ENCODE measurements at regions of chr1 and their contacts with region 1.

Region 1: DNA sequence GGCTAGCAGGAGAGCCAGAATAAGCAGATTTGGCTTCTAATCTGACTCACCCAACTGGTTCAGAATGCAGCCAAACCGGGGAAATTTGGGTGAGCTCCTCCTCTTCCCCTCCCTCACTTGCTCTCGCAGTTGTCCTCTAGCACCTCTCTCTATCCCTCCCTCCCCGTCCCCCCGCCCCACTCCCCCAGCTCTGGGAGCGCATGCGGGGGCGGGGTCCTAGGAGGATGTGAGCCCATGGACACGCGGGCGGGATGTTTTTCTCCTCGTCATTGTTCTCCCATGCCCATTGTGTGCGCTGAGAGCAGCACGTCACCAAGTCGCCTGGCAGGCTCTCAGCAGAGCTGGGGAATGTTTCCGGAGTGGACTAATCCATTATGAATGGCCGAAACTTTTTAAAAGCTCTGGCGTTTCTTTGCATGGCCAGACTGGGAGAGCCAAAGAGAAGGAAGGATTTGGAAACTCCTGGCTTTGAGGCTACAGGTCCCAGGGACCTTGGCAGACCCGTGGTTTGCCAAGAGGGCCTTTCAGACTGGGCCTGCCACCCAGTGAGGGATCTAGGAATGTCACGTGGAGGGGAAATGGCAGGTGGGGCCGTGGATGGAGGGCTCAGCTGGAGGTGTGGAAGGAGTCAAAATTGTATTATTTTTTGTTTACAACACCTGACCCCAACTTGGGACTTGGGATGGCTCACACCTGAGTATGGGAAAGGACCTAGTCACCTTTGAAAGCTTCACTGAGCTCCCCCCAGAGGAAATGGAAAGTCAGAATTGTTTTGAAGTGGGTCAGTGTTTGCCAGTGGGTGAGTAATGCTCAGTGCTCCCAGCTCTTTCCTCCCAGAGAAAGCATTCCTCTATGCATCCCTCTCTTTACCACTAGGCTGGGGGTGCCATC is 39.2 kb downstream of the CDK18 start:
- DNase-seq: peak; percentile 99
- H3K4me3 Mint-ChIP-seq: peak overlapping the region; percentile 66
- H3K27ac Mint-ChIP-seq: peak overlapping the region; percentile 58
- H3K4me1 Mint-ChIP-seq: peaks cover 9% of the 10 kb centered on the region
- H3K27me3 Mint-ChIP-seq: peaks cover 7% of the 10 kb centered on the region
- CTCF ChIP-seq: no peak

Region 2: GRCh38 chr1:205260948-205261732 is 282.5 kb before region 1 on chr1:
- CTCF ChIA-PET with region 1: no interaction called
- POLR2A ChIA-PET with region 1: no interaction called
- intact Hi-C with region 1: no loop called
- DNase-seq: peak; percentile 89
- H3K4me3 Mint-ChIP-seq: no peak overlapping the region
- H3K27ac Mint-ChIP-seq: no peak overlapping the region
- H3K4me1 Mint-ChIP-seq: peaks cover 30% of the 10 kb centered on the region
- H3K27me3 Mint-ChIP-seq: no peaks in the 10 kb centered on the region
- CTCF ChIP-seq: no peak

Region 3: GRCh38 chr1:205528887-205529825 is 14.5 kb before region 1 on chr1:
- CTCF ChIA-PET with region 1: interaction called, 90 read pairs
- POLR2A ChIA-PET with region 1: interaction called, 5 read pairs
- intact Hi-C with region 1: no loop called
- DNase-seq: peak; percentile 89
- H3K4me3 Mint-ChIP-seq: peak overlapping the region; percentile 32
- H3K27ac Mint-ChIP-seq: no peak overlapping the region
- H3K4me1 Mint-ChIP-seq: peaks cover 6% of the 10 kb centered on the region
- H3K27me3 Mint-ChIP-seq: no peaks in the 10 kb centered on the region
- CTCF ChIP-seq: peak; percentile 100

Region 4: DNA sequence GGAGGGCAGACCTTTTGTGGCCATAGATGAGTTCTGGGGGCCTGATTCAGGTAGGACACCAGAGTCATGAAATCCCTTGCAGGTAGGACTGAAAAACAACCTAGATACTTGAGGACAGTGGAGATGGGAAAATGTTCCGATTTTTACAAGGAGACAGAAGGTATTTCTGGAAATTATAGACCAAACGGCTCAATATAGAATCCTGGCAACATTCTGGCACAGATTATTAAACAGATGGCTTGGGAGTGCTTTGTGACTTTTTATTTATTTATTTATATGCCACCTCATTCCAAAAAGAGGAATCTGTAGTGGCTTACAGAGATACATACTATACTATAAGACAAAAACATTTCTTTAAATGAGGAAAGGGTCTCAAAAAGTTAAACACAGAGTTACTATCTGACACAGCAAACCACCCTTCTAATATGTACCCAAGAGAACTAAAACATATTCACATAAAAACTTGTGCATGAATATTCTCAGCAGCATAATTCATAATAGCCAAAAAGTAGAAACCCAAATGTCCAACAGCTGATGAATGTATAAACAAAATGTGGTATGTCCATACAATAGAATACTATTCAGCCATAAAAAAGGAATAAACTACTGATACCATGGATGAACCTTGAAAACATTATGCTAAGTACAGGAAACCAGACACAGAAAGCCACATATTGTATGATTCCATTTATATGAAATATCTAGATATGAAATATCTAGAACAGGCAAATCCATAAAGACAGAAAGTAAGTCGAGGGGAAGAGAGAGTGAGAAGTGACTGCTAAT is 10.6 kb after region 1 on chr1:
- CTCF ChIA-PET with region 1: interaction called, 5 read pairs
- POLR2A ChIA-PET with region 1: interaction called, 10 read pairs
- intact Hi-C with region 1: no loop called
- DNase-seq: no peak
- H3K4me3 Mint-ChIP-seq: no peak overlapping the region
- H3K27ac Mint-ChIP-seq: no peak overlapping the region
- H3K4me1 Mint-ChIP-seq: no peaks in the 10 kb centered on the region
- H3K27me3 Mint-ChIP-seq: peaks cover 93% of the 10 kb centered on the region
- CTCF ChIP-seq: no peak

Measured in MCF 10A (cell line).